HEK293 (cell line): ENCODE measurements at regions of chr22 and their contacts with region 1.

Region 1: GRCh38 chr22:19970479-19971275 is 29.1 kb upstream of the TXNRD2 start:
- H3K4me3 ChIP-seq: no peak overlapping the region
- H3K27ac ChIP-seq: no peak overlapping the region
- H3K4me1 ChIP-seq: no peaks in the 10 kb centered on the region
- CTCF ChIP-seq: peak; percentile 86

Region 2: GRCh38 chr22:19806213-19807145 is 164.2 kb before region 1 on chr22:
- CTCF ChIA-PET with region 1: no interaction called
- POLR2A ChIA-PET with region 1: no interaction called
- H3K4me3 ChIP-seq: no peak overlapping the region
- H3K27ac ChIP-seq: no peak overlapping the region; the same call in 1 of the 2 replicates
- H3K4me1 ChIP-seq: peaks cover 3% of the 10 kb centered on the region
- CTCF ChIP-seq: no peak

Region 3: DNA sequence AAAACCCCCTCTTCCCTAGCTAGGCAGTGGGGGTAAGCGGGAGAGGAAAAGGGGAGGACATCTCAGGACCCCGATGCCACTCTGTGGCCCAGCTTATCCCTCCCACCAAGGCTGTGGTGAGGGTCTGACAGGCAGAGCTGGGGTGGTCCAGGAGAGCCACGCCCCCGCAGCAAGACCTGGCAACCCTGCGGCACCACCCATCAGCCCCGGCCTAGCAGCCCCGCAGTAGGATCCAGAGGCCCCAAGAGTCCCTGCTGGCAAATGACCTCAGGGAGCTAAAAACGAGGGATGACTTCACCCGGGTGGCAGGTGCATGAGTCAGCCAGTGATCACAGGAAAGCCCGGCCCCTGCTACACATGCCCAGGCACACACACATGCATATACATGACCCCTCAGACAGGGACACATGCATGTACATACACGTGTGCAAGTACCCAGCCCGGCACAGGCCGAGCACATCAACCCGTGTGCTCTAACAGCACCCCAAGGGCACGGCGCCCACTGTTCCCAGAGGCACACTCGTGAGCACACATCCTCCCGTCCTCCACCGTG is 13.6 kb after region 1 on chr22:
- CTCF ChIA-PET with region 1: interaction called, 10 read pairs
- POLR2A ChIA-PET with region 1: interaction called, 18 read pairs
- H3K4me3 ChIP-seq: no peak overlapping the region
- H3K27ac ChIP-seq: peak overlapping the region; percentile 42
- H3K4me1 ChIP-seq: peaks cover 14% of the 10 kb centered on the region
- CTCF ChIP-seq: no peak